Lower lobe of right lung (tissue), 2 donors: ENCODE measurements at regions of chr18 and their contacts with region 1.

Region 1: DNA sequence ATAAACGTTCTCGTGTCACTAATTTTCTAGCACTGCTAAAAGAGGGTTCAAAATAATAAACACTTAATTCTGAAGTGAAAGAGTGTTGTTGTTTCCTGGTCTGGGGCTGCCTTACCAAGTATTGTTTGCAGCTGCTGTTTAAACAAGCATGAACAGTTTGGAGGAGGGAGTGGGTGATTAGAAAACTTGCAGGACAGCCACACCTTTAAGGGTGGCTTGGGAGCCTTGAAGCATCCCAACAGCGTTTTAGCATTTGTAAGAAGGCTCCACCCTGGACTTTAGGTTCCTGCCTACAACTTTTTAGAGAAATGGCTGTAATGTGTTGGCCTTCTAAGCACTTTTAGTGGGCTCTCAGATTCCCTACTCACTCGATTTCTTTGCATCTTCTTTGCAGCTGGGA is 371.6 kb downstream of the TGIF1 start:
- DNase-seq: no peak
- ATAC-seq: peak in 1 of 2 donors; percentile 64
- H3K4me3 ChIP-seq: no peak overlapping the region
- H3K27ac ChIP-seq: no peak overlapping the region
- H3K4me1 ChIP-seq: no peaks in the 10 kb centered on the region
- H3K27me3 ChIP-seq: no peaks in the 10 kb centered on the region
- CTCF ChIP-seq: no peak

Region 2: GRCh38 chr18:3869848-3870247 is 48.3 kb after region 1 on chr18:
- intact Hi-C with region 1: loop called (anchors 10 kb)
- DNase-seq: no peak
- ATAC-seq: peak; percentile 71 to 85
- H3K4me3 ChIP-seq: no peak overlapping the region
- H3K27ac ChIP-seq: no peak overlapping the region
- H3K4me1 ChIP-seq: peaks cover under 1% of the 10 kb centered on the region
- H3K27me3 ChIP-seq: no peaks in the 10 kb centered on the region
- CTCF ChIP-seq: peak; percentile 53

Region 3: GRCh38 chr18:4125232-4126230 is 304.0 kb after region 1 on chr18:
- intact Hi-C with region 1: no loop called
- DNase-seq: no peak
- ATAC-seq: no peak
- H3K4me3 ChIP-seq: no peak overlapping the region
- H3K27ac ChIP-seq: no peak overlapping the region
- H3K4me1 ChIP-seq: no peaks in the 10 kb centered on the region
- H3K27me3 ChIP-seq: no peaks in the 10 kb centered on the region
- CTCF ChIP-seq: no peak